ENCODE measurements at regions of chr12 and their contacts with region 1.

Region 1: GRCh38 chr12:27549801-27550652 is 26.0 kb downstream of the PPFIBP1 start:
- DNase-seq: peak; percentile 98
- H3K4me3 Mint-ChIP-seq: peak overlapping the region; percentile 53
- H3K27ac Mint-ChIP-seq: peak overlapping the region; percentile 78
- H3K4me1 Mint-ChIP-seq: peaks cover 37% of the 10 kb centered on the region
- H3K27me3 Mint-ChIP-seq: no peaks in the 10 kb centered on the region
- CTCF ChIP-seq: no peak

Region 2: DNA sequence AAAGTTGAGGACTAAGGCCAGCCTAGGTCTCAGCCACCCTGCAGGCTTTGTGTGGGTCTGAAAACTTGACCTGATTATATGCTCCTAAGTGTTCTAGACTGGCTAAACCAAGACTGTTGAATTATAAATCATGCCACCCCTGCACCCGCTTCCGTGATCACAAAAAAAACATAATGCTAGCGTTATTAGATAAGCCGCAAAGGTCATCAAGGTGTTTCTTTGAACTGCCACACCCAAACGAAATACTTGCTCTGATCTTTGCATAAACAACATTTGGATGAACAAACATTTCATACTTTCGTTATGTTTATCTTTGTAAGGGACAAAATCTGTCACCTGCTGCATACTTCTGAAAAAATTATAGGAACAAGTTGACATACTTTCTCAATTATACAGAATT is 101.0 kb before region 1 on chr12:
- CTCF ChIA-PET with region 1: no interaction called
- POLR2A ChIA-PET with region 1: no interaction called
- intact Hi-C with region 1: no loop called
- DNase-seq: no peak
- H3K4me3 Mint-ChIP-seq: no peak overlapping the region
- H3K27ac Mint-ChIP-seq: no peak overlapping the region
- H3K4me1 Mint-ChIP-seq: no peaks in the 10 kb centered on the region
- H3K27me3 Mint-ChIP-seq: no peaks in the 10 kb centered on the region
- CTCF ChIP-seq: no peak

Region 3: GRCh38 chr12:27564612-27565213 is 14.7 kb after region 1 on chr12:
- CTCF ChIA-PET with region 1: interaction called, 3 read pairs
- POLR2A ChIA-PET with region 1: interaction called, 34 read pairs
- intact Hi-C with region 1: no loop called
- DNase-seq: no peak
- H3K4me3 Mint-ChIP-seq: peak overlapping the region; percentile 62
- H3K27ac Mint-ChIP-seq: peak overlapping the region; percentile 79
- H3K4me1 Mint-ChIP-seq: peaks cover 27% of the 10 kb centered on the region
- H3K27me3 Mint-ChIP-seq: no peaks in the 10 kb centered on the region
- CTCF ChIP-seq: no peak

Region 4: DNA sequence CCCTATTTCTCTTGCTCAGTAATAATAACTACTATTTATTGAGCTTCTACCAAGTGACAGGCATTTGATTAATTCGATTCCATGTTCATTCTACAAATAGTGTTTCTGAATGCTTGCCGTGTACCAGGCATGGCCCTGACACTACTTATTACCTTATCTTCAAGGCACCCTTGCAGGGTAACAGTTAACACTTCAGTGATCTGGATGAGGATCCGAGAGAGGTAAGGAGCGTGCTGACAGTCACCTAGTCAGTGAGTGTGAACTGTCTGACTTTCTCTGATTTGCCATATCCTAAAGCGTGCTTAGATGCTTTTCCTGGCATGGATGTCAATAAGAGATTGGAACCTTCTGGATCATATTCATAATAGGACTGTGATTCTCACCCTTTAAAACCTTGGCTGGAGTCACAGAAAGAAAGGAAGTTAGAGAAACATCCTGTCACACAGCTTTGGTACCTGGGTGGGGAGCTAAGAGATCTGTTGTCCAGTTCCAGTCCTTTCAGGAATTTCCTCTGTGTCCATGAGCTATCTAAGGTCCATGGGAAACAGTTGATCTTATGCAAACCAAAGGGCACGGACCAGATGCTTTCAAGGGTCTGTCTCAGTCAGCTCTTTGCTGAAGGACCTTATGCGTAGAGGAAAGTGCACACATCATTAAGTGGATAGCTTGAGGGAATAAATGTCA is 28.8 kb after region 1 on chr12:
- CTCF ChIA-PET with region 1: interaction called, 3 read pairs
- POLR2A ChIA-PET with region 1: interaction called, 13 read pairs
- intact Hi-C with region 1: no loop called
- DNase-seq: no peak
- H3K4me3 Mint-ChIP-seq: no peak overlapping the region
- H3K27ac Mint-ChIP-seq: peak overlapping the region; percentile 80
- H3K4me1 Mint-ChIP-seq: peaks cover 57% of the 10 kb centered on the region
- H3K27me3 Mint-ChIP-seq: no peaks in the 10 kb centered on the region
- CTCF ChIP-seq: no peak

Region 5: GRCh38 chr12:27592548-27592947 is 42.5 kb after region 1 on chr12:
- CTCF ChIA-PET with region 1: interaction called, 3 read pairs
- POLR2A ChIA-PET with region 1: interaction called, 33 read pairs
- intact Hi-C with region 1: no loop called
- DNase-seq: peak; percentile 88
- H3K4me3 Mint-ChIP-seq: peak overlapping the region; percentile 30
- H3K27ac Mint-ChIP-seq: peak overlapping the region; percentile 97
- H3K4me1 Mint-ChIP-seq: peaks cover 65% of the 10 kb centered on the region
- H3K27me3 Mint-ChIP-seq: no peaks in the 10 kb centered on the region
- CTCF ChIP-seq: no peak

Region 6: DNA sequence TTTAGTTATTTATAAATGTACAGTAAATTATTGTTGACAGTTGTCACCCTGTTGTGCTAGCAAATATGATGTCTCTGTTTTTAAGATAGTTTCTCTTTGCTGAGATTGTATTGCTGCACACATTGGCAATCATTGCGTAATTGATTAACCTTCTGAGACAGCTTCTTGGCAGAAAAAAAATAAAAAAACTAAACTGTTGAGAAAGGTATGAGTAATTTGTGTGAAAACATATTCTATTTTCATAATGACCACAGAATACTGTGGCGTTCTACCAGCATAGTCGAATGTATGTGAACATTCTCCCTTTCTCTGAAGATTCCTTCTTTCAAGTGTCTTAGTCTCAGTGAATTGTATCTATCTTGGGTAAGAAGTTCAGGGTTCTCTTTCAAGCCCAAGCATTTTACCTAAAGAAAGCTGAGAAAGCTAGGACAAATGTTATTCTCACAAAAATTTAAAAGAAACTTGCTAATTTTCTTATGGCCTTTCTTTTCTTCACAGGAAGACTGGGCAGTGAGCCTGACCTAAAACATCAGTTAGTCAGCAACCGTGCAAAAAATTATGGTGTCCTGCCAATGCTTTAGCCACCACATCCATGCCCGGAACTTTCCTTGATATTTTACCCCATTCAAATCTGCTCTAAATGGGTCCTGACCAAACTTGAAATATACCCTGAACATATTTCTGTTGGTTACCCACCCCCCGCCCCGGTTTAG is 77.3 kb after region 1 on chr12:
- CTCF ChIA-PET with region 1: no interaction called
- POLR2A ChIA-PET with region 1: interaction called, 27 read pairs
- intact Hi-C with region 1: no loop called
- DNase-seq: peak; percentile 83
- H3K4me3 Mint-ChIP-seq: peak overlapping the region; percentile 57
- H3K27ac Mint-ChIP-seq: peak overlapping the region; percentile 89
- H3K4me1 Mint-ChIP-seq: peaks cover 33% of the 10 kb centered on the region
- H3K27me3 Mint-ChIP-seq: no peaks in the 10 kb centered on the region
- CTCF ChIP-seq: no peak

Measured in MCF 10A (cell line).